Dorsolateral prefrontal cortex (tissue), 120 donors: ENCODE measurements at regions of chr5 and their contacts with region 1.

Region 1: GRCh38 chr5:17132444-17133083 is 84.9 kb upstream of the BASP1 start:
- DNase-seq: no peak
- H3K4me3 ChIP-seq: no peak overlapping the region
- H3K27ac ChIP-seq: no peak overlapping the region
- H3K27me3 ChIP-seq: no peaks in the 10 kb centered on the region
- CTCF ChIP-seq: peak; percentile 53 to 84 (median 74)

Region 2: DNA sequence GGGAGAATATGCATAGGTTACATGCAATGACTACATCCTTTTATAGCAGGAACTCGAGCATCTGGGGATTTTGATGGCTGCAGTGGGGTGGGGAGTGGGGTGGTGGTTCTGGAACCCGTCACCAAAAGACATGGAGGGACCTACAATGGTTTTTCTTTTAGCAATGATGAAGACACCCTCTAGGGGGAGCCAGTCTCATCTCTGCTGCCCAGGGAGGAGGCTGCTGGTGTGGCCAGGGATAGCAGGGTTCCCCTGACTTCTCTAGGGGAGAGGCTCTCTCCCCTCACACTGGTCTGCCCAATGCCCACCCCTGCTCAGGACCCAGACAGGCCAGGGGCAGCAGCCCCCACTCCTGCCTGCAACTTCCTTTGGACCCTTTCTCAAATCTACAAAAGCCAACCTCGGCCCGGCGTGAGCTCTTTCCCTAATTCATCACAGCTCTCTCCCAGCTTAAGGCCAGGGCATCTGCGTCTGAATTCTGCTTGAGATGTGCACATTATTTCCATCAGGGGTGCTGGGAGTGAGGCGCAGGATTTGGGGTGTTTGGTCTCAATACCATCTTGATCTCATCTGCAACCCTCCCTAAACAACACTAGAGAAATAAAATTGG is 442.2 kb before region 1 on chr5:
- intact Hi-C with region 1: loop called in 1 of 2 experiments (anchors 5 kb)
- DNase-seq: peak in 1 of 10 donors; percentile 49
- H3K4me3 ChIP-seq: peak overlapping the region in 1 of 59 donors; percentile 3
- H3K27ac ChIP-seq: peak overlapping the region in 52 of 59 donors; percentile 1 to 82 (median 62)
- H3K27me3 ChIP-seq: no peaks in the 10 kb centered on the region
- CTCF ChIP-seq: peak; percentile 52 to 86 (median 73)

Region 3: GRCh38 chr5:16791036-16791705 is 341.4 kb before region 1 on chr5:
- intact Hi-C with region 1: loop called in 1 of 2 experiments (anchors 5 kb)
- DNase-seq: peak in 2 of 10 donors; percentile 35 to 46
- H3K4me3 ChIP-seq: peak overlapping the region in 32 of 59 donors; percentile 0 to 54 (median 24)
- H3K27ac ChIP-seq: no peak overlapping the region
- H3K27me3 ChIP-seq: no peaks in the 10 kb centered on the region
- CTCF ChIP-seq: peak; percentile 72 to 96 (median 86)

Region 4: DNA sequence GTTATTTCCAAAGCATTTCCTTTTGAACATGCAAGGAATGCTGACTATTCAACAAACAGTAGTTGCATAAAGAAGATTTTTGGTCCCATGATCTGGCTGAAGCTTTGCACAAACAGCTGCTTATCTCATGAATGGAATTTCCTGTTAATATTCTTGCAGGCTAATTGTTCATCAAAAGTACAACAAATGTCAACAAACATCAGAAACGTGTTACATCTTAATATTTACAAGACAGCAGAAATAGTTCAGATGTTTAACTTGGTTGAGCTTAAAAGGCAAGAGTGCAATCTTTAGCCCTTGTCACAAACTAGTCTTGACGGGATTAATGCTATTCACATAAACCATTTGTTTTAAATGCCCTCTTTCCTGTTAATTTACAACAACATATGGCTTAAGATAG is 36.9 kb after region 1 on chr5:
- intact Hi-C with region 1: no loop called
- DNase-seq: no peak
- H3K4me3 ChIP-seq: no peak overlapping the region
- H3K27ac ChIP-seq: peak overlapping the region in 1 of 59 donors; percentile 11
- H3K27me3 ChIP-seq: no peaks in the 10 kb centered on the region
- CTCF ChIP-seq: no peak